ENCODE measurements at regions of chr1 and their contacts with region 1.

Region 1: GRCh38 chr1:112715264-112716053 is at the start of gene PPM1J:
- DNase-seq: peak; percentile 59 to 90 (median 75)
- H3K4me3 ChIP-seq: peak within 1 kb of the TSS; percentile 35 to 94 (median 75)
- H3K27ac ChIP-seq: peak within 1 kb of the TSS in 43 of 59 donors; percentile 1 to 82 (median 48)
- H3K27me3 ChIP-seq: no peaks in the 10 kb centered on the region
- CTCF ChIP-seq: peak in 15 of 56 donors; percentile 0 to 35 (median 17)
- total RNA-seq, gene PPM1J: 2.4 to 11.9 (median 6.6) TPM

Region 2: DNA sequence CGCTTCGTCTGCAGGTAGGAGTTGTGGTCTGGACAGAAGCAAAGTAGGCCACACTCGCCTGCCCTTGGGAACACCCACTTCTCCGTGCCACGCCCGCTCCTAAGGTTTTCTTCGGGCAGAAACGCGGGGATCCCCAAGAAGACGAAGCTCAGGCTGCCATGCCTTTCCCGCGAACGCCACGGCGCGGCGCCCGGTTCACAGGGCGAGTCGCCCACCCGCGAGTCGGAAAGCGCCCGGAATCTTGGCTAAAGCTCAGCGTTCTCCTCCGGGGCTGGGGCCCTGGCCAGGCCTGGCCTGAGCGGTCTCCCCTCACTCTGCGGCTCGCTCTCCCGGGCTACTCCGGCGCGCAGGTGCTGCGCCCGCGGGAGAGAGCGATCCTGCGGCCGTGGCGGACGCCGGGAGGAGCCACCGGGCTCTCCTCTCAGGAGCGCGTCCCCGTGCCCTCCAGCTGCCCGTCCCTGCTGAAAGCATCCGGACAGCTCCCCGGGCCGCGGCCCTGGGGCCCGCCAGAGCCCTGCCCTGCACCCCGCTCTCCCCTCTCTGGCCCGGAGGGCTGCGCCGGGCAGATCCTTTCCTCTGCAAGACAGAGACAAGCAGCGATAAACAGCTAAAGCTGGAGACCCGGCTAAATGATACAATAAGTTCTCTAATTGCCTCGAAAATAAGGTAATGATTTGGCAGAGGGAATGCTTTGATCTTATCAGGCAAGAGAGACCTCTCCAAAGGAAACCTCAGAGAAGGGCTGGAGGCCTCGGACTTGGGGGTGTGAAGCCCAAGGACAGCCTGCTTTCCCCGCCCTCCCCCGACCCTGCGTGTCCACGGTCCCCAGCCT is 213.4 kb before region 1 on chr1:
- intact Hi-C with region 1: loop called in 1 of 2 experiments (anchors 5 kb)
- DNase-seq: peak; percentile 60 to 86 (median 80)
- H3K4me3 ChIP-seq: peak overlapping the region; percentile 47 to 87 (median 72)
- H3K27ac ChIP-seq: peak overlapping the region in 44 of 59 donors; percentile 3 to 87 (median 62)
- H3K27me3 ChIP-seq: no peaks in the 10 kb centered on the region
- CTCF ChIP-seq: peak in 55 of 56 donors; percentile 45 to 81 (median 68)

Region 3: GRCh38 chr1:112672009-112672408 is 43.5 kb before region 1 on chr1:
- intact Hi-C with region 1: no loop called
- DNase-seq: no peak
- H3K4me3 ChIP-seq: no peak overlapping the region
- H3K27ac ChIP-seq: peak overlapping the region in 6 of 59 donors; percentile 12 to 91 (median 18)
- H3K27me3 ChIP-seq: no peaks in the 10 kb centered on the region
- CTCF ChIP-seq: no peak

Region 4: GRCh38 chr1:112803906-112804762 is 88.7 kb after region 1 on chr1:
- intact Hi-C with region 1: loop called (anchors 1 to 2 kb)
- DNase-seq: peak; percentile 61 to 86 (median 76)
- H3K4me3 ChIP-seq: no peak overlapping the region
- H3K27ac ChIP-seq: no peak overlapping the region
- H3K27me3 ChIP-seq: no peaks in the 10 kb centered on the region
- CTCF ChIP-seq: peak; percentile 30 to 92 (median 76)

Region 5: DNA sequence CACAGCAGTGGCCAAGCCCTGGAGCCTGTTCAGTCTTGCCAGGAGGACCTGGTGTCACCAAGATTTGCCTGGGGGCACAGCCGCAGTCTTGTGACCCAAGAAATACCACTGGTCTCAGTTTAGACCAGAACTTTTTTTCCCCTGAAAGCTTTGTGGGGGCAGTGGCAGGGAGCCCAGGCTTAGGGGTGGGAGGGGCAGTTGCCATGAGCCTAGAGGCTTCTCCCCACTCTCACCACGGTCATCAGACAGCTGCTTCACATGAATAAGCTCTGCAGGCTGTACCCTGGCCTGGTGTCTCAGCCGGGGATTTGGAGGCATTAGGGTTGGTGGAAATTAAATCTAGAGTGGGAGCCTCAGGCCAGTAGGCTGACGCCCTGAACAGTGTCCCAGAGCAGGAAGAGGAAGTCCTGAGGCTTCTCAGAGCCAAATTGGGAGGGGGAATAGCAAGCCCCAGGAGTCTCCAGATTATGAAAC is 166.8 kb after region 1 on chr1:
- intact Hi-C with region 1: loop called (anchors 2 to 10 kb)
- DNase-seq: peak in 3 of 10 donors; percentile 19 to 56 (median 34)
- H3K4me3 ChIP-seq: no peak overlapping the region
- H3K27ac ChIP-seq: peak overlapping the region in 54 of 59 donors; percentile 15 to 89 (median 69)
- H3K27me3 ChIP-seq: no peaks in the 10 kb centered on the region
- CTCF ChIP-seq: no peak

Region 6: GRCh38 chr1:112955781-112956543 is 240.5 kb after region 1 on chr1 and contains the start of gene SLC16A1:
- intact Hi-C with region 1: loop called (anchors 2 to 5 kb)
- DNase-seq: peak; percentile 90 to 97 (median 95)
- H3K4me3 ChIP-seq: peak within 1 kb of the TSS; percentile 66 to 99 (median 88)
- H3K27ac ChIP-seq: peak within 1 kb of the TSS; percentile 65 to 98 (median 94)
- H3K27me3 ChIP-seq: no peaks in the 10 kb centered on the region
- CTCF ChIP-seq: peak in 55 of 56 donors; percentile 18 to 75 (median 52)
- total RNA-seq, gene SLC16A1: 13.6 to 112 (median 47.3) TPM

Region 7: DNA sequence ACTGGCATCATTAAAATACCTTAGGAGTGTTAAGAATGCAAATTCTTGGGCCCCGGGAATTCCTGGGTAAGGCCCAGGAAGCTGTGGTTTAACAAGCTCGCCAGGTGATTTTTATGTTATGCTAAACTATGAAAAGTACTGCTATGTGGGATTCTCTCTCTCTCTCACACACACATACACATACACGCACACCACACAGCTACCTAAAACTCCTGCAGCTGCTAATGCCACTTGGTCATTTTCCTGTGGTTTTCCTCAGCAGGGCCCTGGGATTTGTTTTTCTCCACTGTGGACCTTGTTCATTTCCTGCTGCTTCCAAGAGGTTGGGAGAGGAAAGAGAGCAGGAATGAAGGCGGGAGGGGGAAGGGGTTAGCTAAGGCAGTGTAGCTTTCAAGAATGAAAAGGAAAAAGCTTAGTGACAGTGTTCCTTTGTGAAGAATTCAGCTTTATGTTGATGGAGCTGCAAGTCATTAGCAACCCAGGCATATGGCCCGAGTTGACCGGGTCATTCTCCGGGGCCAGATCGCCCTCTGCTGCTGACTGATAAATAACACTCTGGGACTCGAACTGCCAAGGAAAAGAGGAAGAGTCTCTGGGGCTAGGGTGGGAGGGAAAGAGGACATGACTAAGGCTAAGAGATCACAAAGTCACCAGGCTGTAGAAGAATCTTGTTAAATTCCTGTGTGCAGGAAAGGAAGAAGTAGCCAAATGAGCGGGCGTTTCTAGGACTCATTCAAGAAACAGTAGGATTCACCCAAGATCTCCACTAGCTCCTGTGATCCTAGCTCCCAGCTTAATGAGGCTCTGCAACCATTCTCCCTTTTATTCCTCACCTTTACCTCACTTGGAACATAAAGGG is 327.1 kb after region 1 on chr1:
- intact Hi-C with region 1: loop called (anchors 2 to 10 kb)
- DNase-seq: peak; percentile 63 to 85 (median 76)
- H3K4me3 ChIP-seq: peak overlapping the region in 21 of 59 donors; percentile 0 to 42 (median 15)
- H3K27ac ChIP-seq: peak overlapping the region; percentile 21 to 96 (median 85)
- H3K27me3 ChIP-seq: no peaks in the 10 kb centered on the region
- CTCF ChIP-seq: peak in 55 of 56 donors; percentile 50 to 82 (median 68)

Region 8: GRCh38 chr1:113072757-113073478 is 357.5 kb after region 1 on chr1 and contains the start of gene LRIG2:
- intact Hi-C with region 1: loop called (anchors 1 to 2 kb)
- DNase-seq: peak; percentile 96 to 99 (median 98)
- H3K4me3 ChIP-seq: peak within 1 kb of the TSS; percentile 68 to 99 (median 90)
- H3K27ac ChIP-seq: peak within 1 kb of the TSS; percentile 61 to 98 (median 91)
- H3K27me3 ChIP-seq: no peaks in the 10 kb centered on the region
- CTCF ChIP-seq: peak; percentile 67 to 98 (median 91)
- total RNA-seq, gene LRIG2: 12.1 to 32.7 (median 20.4) TPM

Measured in dorsolateral prefrontal cortex (tissue), 120 donors.